ENCODE measurements at regions of chr9 and their contacts with region 1.

Region 1: GRCh38 chr9:105608721-105609598 is 51.0 kb downstream of the FKTN start:
- DNase-seq: peak; percentile 49
- H3K4me3 ChIP-seq: no peak overlapping the region
- H3K27ac ChIP-seq: no peak overlapping the region
- H3K4me1 ChIP-seq: no peaks in the 10 kb centered on the region
- H3K27me3 ChIP-seq: no peaks in the 10 kb centered on the region
- CTCF ChIP-seq: peak; percentile 75
- EP300 ChIP-seq: no peak
- RAD21 ChIP-seq: peak; percentile 70

Region 2: GRCh38 chr9:105357937-105358336 is 251.0 kb before region 1 on chr9:
- CTCF ChIA-PET with region 1: no interaction called
- POLR2A ChIA-PET with region 1: no interaction called
- DNase-seq: no peak
- H3K4me3 ChIP-seq: no peak overlapping the region
- H3K27ac ChIP-seq: no peak overlapping the region
- H3K4me1 ChIP-seq: no peaks in the 10 kb centered on the region; a peak in 1 of 4 replicates
- H3K27me3 ChIP-seq: no peaks in the 10 kb centered on the region
- CTCF ChIP-seq: no peak
- EP300 ChIP-seq: no peak
- RAD21 ChIP-seq: no peak

Region 3: DNA sequence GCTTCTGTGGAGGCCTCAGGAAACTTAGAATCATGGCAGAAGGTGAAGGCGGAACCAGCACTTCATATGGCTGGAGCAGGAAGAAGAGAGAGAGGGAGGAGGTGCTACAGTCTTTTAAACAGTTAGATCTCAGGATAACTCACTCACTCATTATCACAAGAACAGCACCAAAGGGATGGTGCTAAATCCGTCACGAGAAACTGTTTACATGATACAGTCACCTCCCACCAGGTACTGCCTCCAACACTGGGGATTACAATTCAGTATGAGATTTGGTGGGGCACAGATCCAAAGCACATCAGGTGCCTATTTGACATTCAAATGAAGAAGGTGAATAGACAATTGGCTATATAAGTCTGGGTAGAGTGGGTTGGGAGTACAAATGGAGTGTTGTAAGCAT is 15.8 kb before region 1 on chr9:
- CTCF ChIA-PET with region 1: interaction called, 14 read pairs
- POLR2A ChIA-PET with region 1: no interaction called
- DNase-seq: no peak
- H3K4me3 ChIP-seq: no peak overlapping the region
- H3K27ac ChIP-seq: no peak overlapping the region
- H3K4me1 ChIP-seq: no peaks in the 10 kb centered on the region
- H3K27me3 ChIP-seq: no peaks in the 10 kb centered on the region
- CTCF ChIP-seq: no peak
- EP300 ChIP-seq: no peak
- RAD21 ChIP-seq: no peak

Region 4: DNA sequence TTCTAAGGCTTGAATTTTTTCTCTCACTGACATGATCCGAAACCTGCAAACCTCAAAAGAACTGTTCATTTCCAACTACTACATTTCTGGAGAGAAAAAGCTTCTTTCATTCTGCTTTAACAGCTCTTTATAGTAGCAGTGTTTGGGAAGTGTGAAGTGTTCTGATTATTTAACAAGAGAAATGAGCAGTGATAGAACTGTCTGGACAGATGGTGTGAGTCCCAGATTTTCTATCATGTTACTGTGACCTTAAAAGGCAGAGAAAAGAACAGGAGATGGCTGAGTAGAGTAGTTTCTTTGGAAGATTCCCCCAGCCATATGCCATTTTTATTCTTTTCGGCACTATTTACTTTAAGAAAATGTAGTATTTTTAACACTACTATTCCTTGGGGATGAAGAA is 12.0 kb after region 1 on chr9:
- CTCF ChIA-PET with region 1: interaction called, 12 read pairs
- POLR2A ChIA-PET with region 1: no interaction called
- DNase-seq: no peak
- H3K4me3 ChIP-seq: no peak overlapping the region
- H3K27ac ChIP-seq: no peak overlapping the region
- H3K4me1 ChIP-seq: no peaks in the 10 kb centered on the region
- H3K27me3 ChIP-seq: no peaks in the 10 kb centered on the region
- CTCF ChIP-seq: no peak
- EP300 ChIP-seq: no peak
- RAD21 ChIP-seq: no peak

Region 5: DNA sequence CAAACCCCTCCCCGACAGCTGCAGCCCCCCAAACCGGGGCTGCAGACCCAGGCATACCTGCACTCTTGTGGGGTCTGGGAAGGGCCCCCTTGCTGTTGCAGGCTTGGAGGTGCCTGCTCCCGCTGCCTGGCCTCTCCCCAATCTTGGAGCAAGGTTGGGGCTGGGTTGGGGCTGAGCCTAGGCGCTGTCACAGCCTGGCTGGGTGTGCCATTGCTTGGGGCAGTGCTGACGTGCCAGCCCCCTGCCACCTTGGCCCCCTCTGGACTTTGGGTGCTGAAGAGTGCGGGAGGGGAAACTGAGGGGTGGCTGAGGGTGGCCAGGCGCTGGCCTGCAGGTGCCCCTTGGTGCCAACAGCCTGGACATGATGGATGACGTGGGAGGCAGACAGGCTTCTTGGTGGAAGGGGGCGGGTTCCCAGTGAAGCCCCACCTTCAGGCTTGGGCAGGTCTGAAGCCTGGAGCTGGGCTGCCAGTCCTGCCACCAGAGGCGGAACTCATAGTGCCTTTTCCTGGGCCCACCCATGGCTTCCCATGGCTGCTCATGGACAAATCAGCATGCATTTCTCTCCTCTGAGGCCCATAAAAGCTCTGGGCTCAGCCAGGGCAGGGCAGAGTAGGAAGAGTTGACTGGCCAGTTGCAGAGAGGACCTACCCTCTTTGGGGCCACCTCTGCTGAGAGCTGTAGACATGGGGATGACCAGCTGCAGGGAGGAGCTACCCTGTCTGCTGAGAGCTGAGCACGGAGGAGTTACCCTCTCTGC is 104.5 kb after region 1 on chr9:
- CTCF ChIA-PET with region 1: interaction called, 12 read pairs
- POLR2A ChIA-PET with region 1: no interaction called
- DNase-seq: no peak
- H3K4me3 ChIP-seq: no peak overlapping the region
- H3K27ac ChIP-seq: no peak overlapping the region
- H3K4me1 ChIP-seq: no peaks in the 10 kb centered on the region
- H3K27me3 ChIP-seq: no peaks in the 10 kb centered on the region
- CTCF ChIP-seq: no peak
- EP300 ChIP-seq: no peak
- RAD21 ChIP-seq: no peak

Measured in SK-N-SH (cell line).